Activated T-helper 1 cell treated with anti-CD3 and anti-CD28 coated beads, Interleukin-12 subunit alpha, Interleukin-12 subunit beta, Interleukin-2, Interleukin-4 antibody, amounts not matched to agents 30 ng/mL and 10 ng/mL and 1 ng/mL, durations not matched to agents 14 hours and 24 hours and 36 hours (primary cell): ENCODE measurements at regions of chr9 and their contacts with region 1.

Region 1: DNA sequence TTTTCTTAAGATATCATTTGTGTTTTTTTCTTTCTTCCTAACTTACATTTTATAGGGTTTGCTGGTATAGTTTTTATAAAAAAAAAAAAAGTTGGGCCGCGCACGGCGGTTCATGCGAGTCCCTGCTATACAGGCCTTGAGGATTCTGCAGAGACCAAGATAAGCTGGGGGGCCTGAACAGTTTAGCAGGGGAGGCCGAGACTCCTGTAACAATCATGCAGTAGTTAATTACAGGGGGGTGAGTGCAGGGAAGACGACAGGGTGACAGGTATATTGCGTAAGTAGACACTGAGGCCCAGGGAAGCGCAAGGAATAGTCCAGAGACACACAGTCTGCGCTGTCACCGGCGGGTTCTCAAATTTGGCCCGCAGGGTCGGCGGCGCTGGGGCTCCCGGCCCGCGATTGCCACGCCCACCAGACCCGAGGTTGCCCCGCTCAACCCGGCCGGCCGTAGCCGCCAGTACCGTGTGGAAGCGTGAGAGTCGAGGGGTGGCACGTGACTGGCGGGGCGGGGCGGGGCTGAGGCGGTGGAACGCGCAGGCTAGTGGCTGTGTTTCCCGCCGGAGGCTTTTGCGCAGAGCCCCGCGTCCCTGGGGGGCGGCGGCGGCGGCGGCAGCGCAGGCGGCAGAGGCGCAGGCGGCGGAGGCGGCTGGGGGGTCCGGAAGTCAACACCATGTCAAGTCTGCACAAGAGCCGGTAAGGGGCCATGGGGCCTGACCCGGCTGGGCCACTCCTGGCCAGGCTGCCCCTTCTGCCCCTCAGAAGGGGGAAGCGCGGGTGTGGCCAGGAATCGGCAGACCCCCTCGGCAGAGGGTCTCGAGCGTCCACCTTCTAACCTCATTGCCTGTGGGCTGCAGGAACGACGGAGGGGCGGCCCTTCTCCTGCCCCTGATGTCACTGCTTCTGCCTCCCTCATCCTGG is at the start of gene TBC1D13:
- DNase-seq: peak; percentile 84
- H3K4me3 Mint-ChIP-seq: peak within 1 kb of the TSS; percentile 97
- H3K27ac Mint-ChIP-seq: peak within 1 kb of the TSS; percentile 89
- H3K4me1 Mint-ChIP-seq: peaks cover 22% of the 10 kb centered on the region
- H3K27me3 Mint-ChIP-seq: no peaks in the 10 kb centered on the region
- total RNA-seq, gene TBC1D13: 21.2 and 22.3 TPM in 2 replicates

Region 2: DNA sequence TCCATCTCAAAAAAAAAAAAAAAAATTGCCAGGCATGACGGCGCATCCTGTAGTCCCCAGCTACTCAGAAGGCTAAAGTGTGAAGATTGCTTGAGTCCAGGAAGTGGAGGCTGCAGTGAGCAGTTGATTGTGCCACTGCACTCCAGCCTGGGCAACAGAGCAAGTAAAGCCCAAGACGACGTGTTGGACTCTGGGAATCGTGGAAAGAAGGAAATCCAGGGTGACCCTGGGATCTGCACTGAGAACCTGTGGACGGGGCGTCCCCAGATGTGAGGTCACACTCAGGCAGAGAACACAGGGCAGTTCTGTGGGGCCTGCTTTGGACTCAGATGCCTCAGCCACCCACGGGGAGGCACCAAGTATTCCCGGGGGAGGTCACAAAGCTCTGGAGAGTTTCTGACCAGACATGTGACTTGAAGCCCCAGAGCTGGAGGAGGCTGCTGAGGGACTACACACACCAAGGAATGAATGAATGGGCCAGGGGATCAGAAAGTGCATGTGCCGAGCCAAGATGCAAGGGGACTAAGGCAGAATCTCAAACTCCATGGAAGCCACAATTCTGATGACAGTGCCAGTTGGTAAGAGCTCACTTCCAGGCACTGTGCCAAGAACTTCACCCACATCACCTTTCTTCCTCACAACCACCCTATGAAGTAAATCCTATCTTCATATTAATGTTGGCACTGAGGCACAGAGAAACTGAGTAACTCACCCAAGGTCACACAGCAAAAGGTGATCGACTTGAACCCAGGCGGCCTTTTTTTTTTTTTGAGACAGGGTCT is 143.2 kb before region 1 on chr9:
- intact Hi-C with region 1: loop called (anchors 5 kb)
- DNase-seq: no peak
- H3K4me3 Mint-ChIP-seq: no peak overlapping the region
- H3K27ac Mint-ChIP-seq: peak overlapping the region; percentile 21
- H3K4me1 Mint-ChIP-seq: peaks cover 7% of the 10 kb centered on the region
- H3K27me3 Mint-ChIP-seq: no peaks in the 10 kb centered on the region

Region 3: GRCh38 chr9:128702445-128702948 is 84.4 kb before region 1 on chr9 and contains the start of gene PKN3:
- intact Hi-C with region 1: loop called (anchors 5 kb)
- DNase-seq: peak; percentile 82
- H3K4me3 Mint-ChIP-seq: peak within 1 kb of the TSS; percentile 86
- H3K27ac Mint-ChIP-seq: peak within 1 kb of the TSS; percentile 77
- H3K4me1 Mint-ChIP-seq: no peaks in the 10 kb centered on the region
- H3K27me3 Mint-ChIP-seq: peaks cover 2% of the 10 kb centered on the region
- total RNA-seq, gene PKN3: 17.7 and 19.3 TPM in 2 replicates

Region 4: DNA sequence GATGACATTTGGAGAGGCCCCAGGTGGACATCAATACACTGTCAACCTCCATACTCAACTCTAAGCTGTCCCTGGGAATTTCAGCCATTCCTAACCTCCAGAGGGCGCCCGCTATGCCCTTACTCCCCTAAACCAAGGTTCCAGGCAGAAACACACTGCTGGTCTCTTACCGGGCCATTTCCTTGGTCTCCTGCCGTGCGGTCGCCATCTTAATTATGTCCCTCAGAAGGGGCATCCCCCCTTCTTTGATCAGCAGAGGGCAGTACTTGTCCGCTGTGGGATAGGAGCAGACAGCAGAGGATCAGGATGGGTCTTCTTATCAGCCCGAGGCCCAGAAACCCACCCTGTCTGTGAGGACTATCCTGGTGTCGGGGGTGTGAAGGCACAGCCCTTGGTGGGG is 53.7 kb before region 1 on chr9:
- intact Hi-C with region 1: loop called (anchors 2 kb)
- DNase-seq: no peak
- H3K4me3 Mint-ChIP-seq: no peak overlapping the region
- H3K27ac Mint-ChIP-seq: no peak overlapping the region
- H3K4me1 Mint-ChIP-seq: no peaks in the 10 kb centered on the region
- H3K27me3 Mint-ChIP-seq: no peaks in the 10 kb centered on the region

Region 5: GRCh38 chr9:128809832-128810231 is 22.9 kb after region 1 on chr9:
- intact Hi-C with region 1: no loop called
- DNase-seq: no peak
- H3K4me3 Mint-ChIP-seq: no peak overlapping the region
- H3K27ac Mint-ChIP-seq: no peak overlapping the region
- H3K4me1 Mint-ChIP-seq: no peaks in the 10 kb centered on the region
- H3K27me3 Mint-ChIP-seq: no peaks in the 10 kb centered on the region

Region 6: GRCh38 chr9:128829477-128830251 is 42.7 kb after region 1 on chr9 and contains the start of gene SPOUT1:
- intact Hi-C with region 1: loop called (anchors 2 kb)
- DNase-seq: peak; percentile 95
- H3K4me3 Mint-ChIP-seq: peak within 1 kb of the TSS; percentile 97
- H3K27ac Mint-ChIP-seq: peak within 1 kb of the TSS; percentile 88
- H3K4me1 Mint-ChIP-seq: peaks cover 23% of the 10 kb centered on the region
- H3K27me3 Mint-ChIP-seq: no peaks in the 10 kb centered on the region
- total RNA-seq, gene SPOUT1: 151 and 158 TPM in 2 replicates

Region 7: DNA sequence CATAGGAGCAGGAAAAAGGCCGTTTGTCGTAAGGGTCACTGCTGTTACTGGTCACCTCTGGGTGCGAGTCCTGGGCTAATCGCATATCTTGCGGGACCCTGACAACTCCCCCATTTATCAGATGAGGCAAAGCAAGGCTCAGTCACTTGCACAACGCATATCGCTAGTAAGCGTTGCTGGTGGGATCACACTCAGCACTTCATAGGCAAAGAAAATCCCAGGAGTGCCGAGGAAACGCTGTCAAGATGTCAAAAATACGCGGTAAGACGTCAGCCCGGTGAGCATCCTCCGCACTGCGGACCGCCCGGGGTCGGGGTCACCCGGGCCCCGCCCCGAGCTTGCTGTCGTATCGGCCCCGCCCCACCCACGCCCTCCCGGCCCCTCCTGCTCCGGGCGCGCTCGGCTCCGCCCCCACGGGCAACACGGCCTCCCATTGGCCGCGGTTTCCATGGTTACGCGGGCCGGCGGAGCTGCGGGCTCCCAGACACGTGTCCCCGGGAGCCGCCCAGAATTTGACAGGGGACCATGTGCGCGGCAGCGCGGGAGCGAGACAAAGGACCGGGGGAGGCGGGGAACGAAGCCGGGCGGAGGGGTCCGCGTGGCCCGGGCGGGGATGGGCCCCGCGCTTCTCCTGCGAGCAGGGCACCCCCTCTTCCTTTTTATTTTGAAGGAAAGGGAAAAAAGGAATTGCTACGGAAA is 471.3 kb after region 1 on chr9:
- intact Hi-C with region 1: no loop called
- DNase-seq: peak; percentile 85
- H3K4me3 Mint-ChIP-seq: peak overlapping the region; percentile 60
- H3K27ac Mint-ChIP-seq: no peak overlapping the region
- H3K4me1 Mint-ChIP-seq: peaks cover 33% of the 10 kb centered on the region
- H3K27me3 Mint-ChIP-seq: peaks cover 23% of the 10 kb centered on the region